Cardiac septum (tissue), 1 donor: ENCODE measurements at regions of chr3 and their contacts with region 1.

Region 1: DNA sequence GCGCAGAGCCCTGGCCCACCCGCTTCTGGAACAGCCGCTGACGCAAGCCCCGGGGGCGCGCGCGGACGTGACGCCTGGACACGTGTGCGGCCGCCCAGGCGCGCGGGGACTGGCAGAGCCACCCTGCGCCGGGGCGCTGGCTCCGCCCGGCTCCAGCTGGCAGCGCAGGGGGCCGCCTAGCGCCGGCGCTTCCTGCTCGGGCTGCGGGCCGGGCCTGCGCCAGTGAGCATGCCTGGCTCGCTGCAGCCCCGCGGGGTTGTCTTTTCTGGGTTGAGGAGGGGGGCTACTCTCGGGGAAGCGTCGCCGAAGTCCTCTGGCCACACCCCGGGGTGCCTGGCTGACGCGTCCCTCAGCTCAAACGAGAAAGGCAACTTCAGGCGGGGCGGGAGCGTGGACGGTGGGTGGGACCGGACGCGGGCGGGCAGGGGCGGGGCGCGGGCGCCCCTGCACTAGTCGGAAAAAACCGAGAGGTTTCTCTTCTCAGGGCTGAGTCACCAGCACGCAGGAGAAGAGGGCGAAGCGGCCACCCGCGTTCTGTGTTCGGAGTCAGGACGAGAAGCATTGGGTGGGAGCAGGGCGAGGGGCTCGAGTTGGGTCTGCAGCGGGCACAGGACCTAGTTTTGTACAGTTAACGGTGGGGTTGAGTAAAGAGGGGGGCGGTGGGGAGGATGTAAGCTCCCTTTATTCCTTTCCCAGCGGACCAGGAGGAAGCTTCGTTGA is at the start of gene SIAH2:
- DNase-seq: peak; percentile 98
- total RNA-seq, gene SIAH2: 34.4 TPM

Region 2: GRCh38 chr3:150546226-150547044 is 216.8 kb before region 1 on chr3 and contains the starts of genes EIF2A and SERP1:
- intact Hi-C with region 1: loop called (anchors 2 kb)
- DNase-seq: peak; percentile 100
- total RNA-seq, gene EIF2A: 65.4 TPM
- total RNA-seq, gene SERP1: 24.0 TPM

Region 3: DNA sequence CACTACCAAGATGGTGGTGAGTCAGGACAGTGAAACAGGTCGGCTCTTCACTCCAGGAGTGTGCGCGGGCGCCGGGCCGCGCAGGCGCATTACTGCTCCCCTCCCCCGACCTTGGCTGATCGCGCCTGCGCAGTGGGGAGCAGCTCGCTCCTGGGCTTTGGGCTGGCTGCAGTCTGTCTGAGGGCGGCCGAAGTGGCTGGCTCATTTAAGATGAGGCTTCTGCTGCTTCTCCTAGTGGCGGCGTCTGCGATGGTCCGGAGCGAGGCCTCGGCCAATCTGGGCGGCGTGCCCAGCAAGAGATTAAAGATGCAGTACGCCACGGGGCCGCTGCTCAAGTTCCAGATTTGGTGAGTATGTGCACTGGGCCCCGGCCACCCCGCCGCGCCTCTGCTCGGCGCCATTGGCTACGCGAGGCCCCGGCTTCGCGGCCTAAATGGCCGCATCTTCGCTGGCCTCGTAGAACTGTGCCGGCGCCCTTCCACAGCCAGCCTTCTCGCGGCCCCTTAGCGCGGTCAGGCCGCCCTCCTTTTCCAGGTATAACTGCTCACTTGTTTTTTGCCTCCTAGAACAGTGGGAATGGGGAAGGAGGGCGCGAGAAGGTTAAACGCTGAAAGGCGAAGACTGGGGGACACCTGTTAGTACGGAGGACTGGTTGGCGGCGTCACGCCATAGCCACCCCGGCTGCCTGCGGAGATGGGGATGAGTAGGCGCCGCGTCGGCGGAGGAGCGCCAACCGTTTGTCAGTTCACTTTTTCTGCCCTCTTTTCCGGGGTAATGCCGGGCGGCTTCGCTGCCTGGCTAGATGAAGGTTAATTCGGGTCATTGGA is 159.9 kb before region 1 on chr3 and contains the start of gene SELENOT:
- intact Hi-C with region 1: loop called (anchors 5 kb)
- DNase-seq: peak; percentile 98
- total RNA-seq, gene SELENOT: 75.8 TPM

Region 4: GRCh38 chr3:150666167-150666566 is 97.1 kb before region 1 on chr3:
- intact Hi-C with region 1: no loop called
- DNase-seq: no peak

Region 5: DNA sequence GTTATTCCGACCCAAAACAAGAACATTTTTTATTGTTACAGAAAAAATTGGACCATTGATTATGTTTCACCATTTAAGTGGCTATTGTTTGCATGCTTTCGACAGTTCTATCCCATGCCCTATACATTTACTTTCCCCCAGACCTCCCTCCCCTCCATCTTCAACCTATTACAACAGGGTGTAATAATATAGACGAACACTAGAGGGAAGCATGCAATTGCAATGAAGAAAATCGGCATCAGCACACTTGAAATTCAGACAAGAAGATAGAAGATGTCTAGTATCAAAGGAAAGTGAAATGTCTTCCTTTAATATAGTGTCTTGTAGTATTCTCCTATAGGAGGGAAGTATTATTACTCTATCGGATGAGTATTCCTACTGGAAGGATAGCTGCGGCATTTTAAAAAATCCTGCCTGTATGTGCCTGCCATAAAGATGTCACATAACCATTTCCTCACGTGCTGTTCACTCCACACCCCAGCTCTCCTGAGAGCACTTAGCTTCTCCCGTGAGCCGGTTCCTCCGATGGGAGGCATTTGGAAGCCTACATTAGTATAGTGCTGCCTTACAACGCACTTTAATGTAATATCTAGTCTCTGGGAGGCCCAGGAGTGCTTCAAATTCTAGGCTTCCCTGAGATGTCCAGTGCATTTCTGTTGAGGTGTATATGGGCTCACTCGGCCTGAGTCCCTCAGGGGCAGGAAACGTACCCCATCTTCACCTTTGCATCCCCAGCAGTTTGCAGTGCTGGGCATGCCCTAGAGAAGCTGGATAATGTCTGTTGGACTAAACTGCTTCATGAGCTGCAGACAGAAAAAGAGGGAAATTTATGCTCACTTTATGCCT is 41.8 kb before region 1 on chr3:
- intact Hi-C with region 1: loop called (anchors 5 kb)
- DNase-seq: no peak

Region 6: DNA sequence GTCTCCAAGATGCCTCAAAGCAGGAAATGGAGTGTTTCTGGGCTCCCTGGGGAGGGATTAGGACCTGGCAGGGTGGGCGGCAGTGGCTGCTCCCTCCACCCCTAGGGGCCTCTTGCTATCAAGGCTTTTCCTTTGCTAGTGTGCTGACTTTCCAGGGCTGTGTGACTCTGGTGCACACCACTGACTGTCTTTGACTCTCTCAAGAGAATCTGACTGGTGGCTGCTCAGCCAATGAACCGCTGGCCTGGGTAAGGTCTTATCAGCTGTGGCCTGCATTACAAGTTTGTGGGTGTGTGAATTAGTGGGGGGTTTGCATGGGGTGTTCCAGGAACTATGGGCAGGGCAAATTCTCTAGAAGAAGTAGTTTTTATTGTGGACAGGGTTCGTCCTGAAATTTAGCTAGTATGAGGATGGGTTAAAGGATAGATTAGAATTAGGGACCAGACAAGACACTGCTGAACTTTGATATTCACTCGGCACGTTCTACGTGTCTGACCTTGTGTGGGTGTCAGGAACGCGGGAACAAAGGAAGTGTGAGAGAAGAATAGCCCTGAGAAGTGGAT is 29.8 kb before region 1 on chr3:
- intact Hi-C with region 1: loop called (anchors 2 kb)
- DNase-seq: no peak